Breast epithelium (tissue), 4 donors: ENCODE measurements at regions of chr1 and their contacts with region 1.

Region 1: DNA sequence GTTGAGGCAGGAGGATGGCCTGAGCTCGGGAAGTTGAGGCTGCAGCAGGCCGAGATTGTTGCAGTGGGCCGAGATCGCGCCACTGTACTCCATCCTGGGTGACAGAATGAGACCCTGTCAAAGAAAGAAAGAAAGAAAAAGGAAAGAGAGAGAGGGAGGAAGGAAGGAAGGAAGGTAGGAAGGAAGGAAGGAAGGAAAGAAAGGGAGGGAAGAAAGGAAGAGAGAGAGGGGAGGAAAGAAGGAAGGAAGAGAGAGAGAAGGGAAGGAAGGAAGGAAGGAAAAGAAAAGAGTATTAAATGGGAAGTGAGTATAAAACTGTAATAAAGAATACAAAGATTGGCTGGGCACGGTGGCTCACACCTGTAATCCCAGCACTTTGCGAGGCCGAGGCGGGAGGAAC is 18.4 kb upstream of the ABL2 start:
- DNase-seq: no peak
- H3K4me3 ChIP-seq: no peak overlapping the region
- H3K27ac ChIP-seq: no peak overlapping the region
- H3K4me1 ChIP-seq: no peaks in the 10 kb centered on the region
- H3K27me3 ChIP-seq: no peaks in the 10 kb centered on the region
- CTCF ChIP-seq: no peak
- POLR2A ChIP-seq: no peak

Region 2: GRCh38 chr1:179263121-179263520 is 15.2 kb after region 1 on chr1:
- intact Hi-C with region 1: loop called (anchors 2 kb)
- DNase-seq: no peak
- H3K4me3 ChIP-seq: no peak overlapping the region
- H3K27ac ChIP-seq: no peak overlapping the region
- H3K4me1 ChIP-seq: no peaks in the 10 kb centered on the region
- H3K27me3 ChIP-seq: no peaks in the 10 kb centered on the region
- CTCF ChIP-seq: no peak
- POLR2A ChIP-seq: no peak

Region 3: GRCh38 chr1:180123463-180123936 is 875.6 kb after region 1 on chr1:
- intact Hi-C with region 1: no loop called
- DNase-seq: no peak
- H3K4me3 ChIP-seq: no peak overlapping the region
- H3K27ac ChIP-seq: no peak overlapping the region
- H3K4me1 ChIP-seq: no peaks in the 10 kb centered on the region
- H3K27me3 ChIP-seq: no peaks in the 10 kb centered on the region
- CTCF ChIP-seq: no peak
- POLR2A ChIP-seq: no peak